Endothelial cell of umbilical vein (primary cell): ENCODE measurements at regions of chr4 and their contacts with region 1.

Region 1: GRCh38 chr4:139501927-139502899 is 48.3 kb downstream of the RAB33B start:
- DNase-seq: no peak
- H3K4me3 ChIP-seq: no peak overlapping the region
- H3K27ac ChIP-seq: no peak overlapping the region
- H3K4me1 ChIP-seq: no peaks in the 10 kb centered on the region
- H3K27me3 ChIP-seq: no peaks in the 10 kb centered on the region
- CTCF ChIP-seq: no peak
- POLR2A ChIP-seq: peak; percentile 11

Region 2: GRCh38 chr4:139386421-139386820 is 115.8 kb before region 1 on chr4:
- CTCF ChIA-PET with region 1: no interaction called
- POLR2A ChIA-PET with region 1: no interaction called
- dilution Hi-C with region 1: no loop called
- intact Hi-C with region 1: no loop called
- DNase-seq: no peak
- H3K4me3 ChIP-seq: no peak overlapping the region
- H3K27ac ChIP-seq: no peak overlapping the region
- H3K4me1 ChIP-seq: no peaks in the 10 kb centered on the region
- H3K27me3 ChIP-seq: no peaks in the 10 kb centered on the region
- CTCF ChIP-seq: no peak
- POLR2A ChIP-seq: no peak

Region 3: DNA sequence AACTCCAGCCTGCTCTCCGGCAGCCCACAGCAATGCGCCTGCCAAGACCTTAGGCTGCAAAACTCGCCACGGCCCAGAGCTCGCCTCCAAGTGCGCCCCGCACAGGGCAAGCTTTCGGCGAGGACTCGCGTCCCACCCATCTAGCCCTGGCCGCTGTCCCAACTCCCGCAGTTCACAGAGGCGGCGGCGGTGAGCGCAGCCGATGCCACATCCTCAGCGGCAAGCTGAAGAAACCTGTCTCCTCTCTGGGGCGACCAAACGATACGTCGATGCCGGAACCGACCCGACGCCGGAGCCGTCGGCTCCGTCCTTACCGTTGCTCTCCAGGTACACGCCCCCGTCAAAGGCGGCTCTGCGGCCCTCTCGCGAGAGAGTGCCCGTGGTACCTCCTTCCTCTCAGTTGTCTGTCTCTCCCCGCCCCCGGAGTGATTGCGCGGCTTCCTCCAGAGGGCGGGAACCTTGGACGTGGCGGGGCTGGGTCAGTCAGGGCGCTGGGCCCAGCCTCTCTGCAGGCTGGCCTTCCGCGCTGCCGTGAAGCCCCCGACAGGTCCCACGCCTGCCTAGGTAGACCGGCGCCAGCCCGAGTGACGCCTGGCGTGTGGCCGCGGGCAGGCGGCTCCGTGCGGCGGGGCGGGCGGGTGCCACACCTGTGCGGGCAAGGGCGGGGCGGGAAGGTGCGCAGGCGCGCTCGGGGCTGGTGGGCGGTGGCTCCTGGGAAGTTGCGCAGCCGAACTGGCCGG is 48.7 kb before region 1 on chr4:
- CTCF ChIA-PET with region 1: interaction called, 10 read pairs
- POLR2A ChIA-PET with region 1: no interaction called
- dilution Hi-C with region 1: no loop called
- intact Hi-C with region 1: no loop called
- DNase-seq: peak; percentile 98
- H3K4me3 ChIP-seq: peak overlapping the region; percentile 91 to 99 (median 97)
- H3K27ac ChIP-seq: peak overlapping the region; percentile 89
- H3K4me1 ChIP-seq: peaks cover 45% of the 10 kb centered on the region
- H3K27me3 ChIP-seq: no peaks in the 10 kb centered on the region
- CTCF ChIP-seq: peak in 1 of 2 donors; percentile 4
- POLR2A ChIP-seq: peak; percentile 89

Region 4: DNA sequence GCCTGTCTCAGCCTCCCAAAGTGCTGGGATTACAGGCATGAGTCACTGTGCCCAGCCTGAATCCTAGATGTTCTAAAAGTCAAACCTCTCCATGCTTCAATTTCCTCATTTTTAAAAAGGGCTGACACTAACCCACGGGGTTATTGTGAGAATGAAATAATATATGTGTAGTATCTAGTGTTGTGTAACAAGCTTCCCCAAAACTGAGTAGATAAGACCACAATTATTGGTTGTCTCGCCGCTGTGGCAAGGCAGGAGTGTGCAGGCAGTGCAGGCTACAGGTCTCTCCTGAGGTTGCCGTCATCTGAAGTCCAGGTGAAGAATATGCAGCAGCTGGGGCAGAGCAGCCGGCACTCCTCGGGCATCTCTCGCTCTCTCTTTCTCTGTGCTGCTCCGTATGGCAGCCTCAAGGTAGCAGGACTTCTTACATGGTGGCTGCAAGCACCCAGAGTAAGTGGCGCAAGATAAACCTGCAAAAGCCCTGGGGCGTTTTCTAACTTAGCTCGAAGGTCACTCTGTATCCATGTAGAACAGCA is 17.4 kb before region 1 on chr4:
- CTCF ChIA-PET with region 1: interaction called, 21 read pairs
- POLR2A ChIA-PET with region 1: no interaction called
- dilution Hi-C with region 1: no loop called
- intact Hi-C with region 1: no loop called
- DNase-seq: no peak
- H3K4me3 ChIP-seq: no peak overlapping the region
- H3K27ac ChIP-seq: no peak overlapping the region
- H3K4me1 ChIP-seq: peaks cover 8% of the 10 kb centered on the region
- H3K27me3 ChIP-seq: no peaks in the 10 kb centered on the region
- CTCF ChIP-seq: no peak
- POLR2A ChIP-seq: no peak

Region 5: GRCh38 chr4:139530833-139531427 is 28.7 kb after region 1 on chr4:
- CTCF ChIA-PET with region 1: interaction called, 14 read pairs
- POLR2A ChIA-PET with region 1: no interaction called
- dilution Hi-C with region 1: no loop called
- intact Hi-C with region 1: loop called (anchors 1 kb)
- DNase-seq: peak; percentile 50
- H3K4me3 ChIP-seq: no peak overlapping the region
- H3K27ac ChIP-seq: no peak overlapping the region
- H3K4me1 ChIP-seq: no peaks in the 10 kb centered on the region
- H3K27me3 ChIP-seq: no peaks in the 10 kb centered on the region
- CTCF ChIP-seq: peak; percentile 68
- POLR2A ChIP-seq: no peak

Region 6: GRCh38 chr4:139633661-139634060 is 131.4 kb after region 1 on chr4:
- CTCF ChIA-PET with region 1: interaction called, 14 read pairs
- POLR2A ChIA-PET with region 1: no interaction called
- dilution Hi-C with region 1: no loop called
- intact Hi-C with region 1: loop called (anchors 5 kb)
- DNase-seq: peak; percentile 29
- H3K4me3 ChIP-seq: no peak overlapping the region
- H3K27ac ChIP-seq: no peak overlapping the region
- H3K4me1 ChIP-seq: no peaks in the 10 kb centered on the region
- H3K27me3 ChIP-seq: peaks cover 13 to 14% of the 10 kb centered on the region in 2 experiments
- CTCF ChIP-seq: peak; percentile 11 to 40
- POLR2A ChIP-seq: no peak

Region 7: DNA sequence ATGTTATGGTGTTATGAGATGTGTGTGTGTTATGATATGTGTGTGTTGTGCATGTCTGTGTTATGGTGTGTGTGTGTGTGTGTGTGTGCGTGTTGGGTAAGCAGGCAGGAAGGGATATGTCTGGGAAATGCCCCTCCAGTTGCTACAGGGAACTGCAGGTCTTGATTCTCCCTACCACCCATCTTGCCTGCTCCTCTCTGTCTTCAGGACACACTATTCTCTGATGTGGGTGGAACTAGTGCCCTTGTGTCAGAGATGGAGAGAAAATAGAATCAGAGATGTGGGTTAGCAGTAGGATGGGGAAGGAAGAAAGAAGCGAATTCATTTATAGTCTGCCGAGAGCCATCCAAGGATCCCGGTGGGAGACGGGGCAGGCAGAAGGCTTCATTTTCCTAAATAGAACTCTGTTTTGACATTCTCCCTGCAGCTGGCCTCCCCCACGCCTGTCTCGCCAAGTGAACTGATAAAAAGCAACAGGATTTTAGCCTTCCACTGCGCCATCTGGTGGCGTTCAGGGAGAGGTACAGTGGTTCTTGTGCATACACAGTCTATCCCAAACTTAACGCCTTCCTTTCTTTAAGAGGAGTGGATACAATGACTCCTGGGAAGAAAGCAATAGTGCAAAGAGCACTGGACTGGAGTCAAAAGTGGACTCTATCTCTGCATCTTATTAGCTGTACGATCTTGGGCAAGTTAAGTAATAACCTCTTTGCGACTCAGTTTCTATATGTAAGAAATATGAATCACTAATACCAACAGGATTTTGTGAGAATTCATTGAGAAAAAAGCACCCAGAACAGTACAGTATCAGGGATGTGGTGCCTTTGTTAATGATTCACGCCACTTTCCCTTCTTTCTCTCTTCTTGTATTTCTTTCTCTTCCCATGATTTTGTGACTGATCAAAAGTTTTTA is 149.3 kb after region 1 on chr4:
- CTCF ChIA-PET with region 1: interaction called, 8 read pairs
- POLR2A ChIA-PET with region 1: no interaction called
- dilution Hi-C with region 1: no loop called
- intact Hi-C with region 1: loop called (anchors 1 kb)
- DNase-seq: peak; percentile 82
- H3K4me3 ChIP-seq: no peak overlapping the region
- H3K27ac ChIP-seq: no peak overlapping the region
- H3K4me1 ChIP-seq: no peaks in the 10 kb centered on the region
- H3K27me3 ChIP-seq: no peaks in the 10 kb centered on the region
- CTCF ChIP-seq: peak; percentile 85 to 88
- POLR2A ChIP-seq: no peak